ENCODE measurements at regions of chr20 and their contacts with region 1.

Region 1: DNA sequence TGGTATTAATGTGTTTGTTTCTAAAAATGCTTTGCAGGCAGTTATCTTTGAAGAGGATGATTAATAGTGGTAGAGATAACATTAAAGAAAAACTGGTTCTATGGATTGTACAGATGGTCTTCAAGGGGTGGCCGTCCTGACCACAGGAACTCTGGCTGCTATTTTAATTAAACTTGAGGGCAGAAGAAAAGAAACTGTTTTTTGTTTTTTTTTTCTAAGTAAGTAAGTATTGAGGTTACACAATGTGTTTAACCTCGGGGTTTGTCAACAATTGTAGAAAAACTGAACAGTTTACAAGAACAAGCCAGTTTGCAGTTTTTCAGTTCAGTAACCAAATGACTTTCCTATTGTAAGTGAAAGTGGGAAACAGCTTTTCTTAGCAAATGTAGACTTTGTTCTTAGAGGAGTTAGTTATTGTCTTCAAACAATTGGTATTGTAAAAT is 77.0 kb downstream of the PLCB1 start:
- DNase-seq: no peak
- ATAC-seq: no peak
- H3K4me3 ChIP-seq: no peak overlapping the region
- H3K27ac ChIP-seq: no peak overlapping the region
- H3K4me1 ChIP-seq: peaks cover 75% of the 10 kb centered on the region
- H3K27me3 ChIP-seq: no peaks in the 10 kb centered on the region
- CTCF ChIP-seq: no peak
- EP300 ChIP-seq: peak in 1 of 2 experiments; percentile 49; a peak in 1 of 4 replicates
- POLR2A ChIP-seq: no peak
- RAD21 ChIP-seq: no peak

Region 2: GRCh38 chr20:8223091-8223870 is 14.3 kb after region 1 on chr20:
- CTCF ChIA-PET with region 1: no interaction called
- POLR2A ChIA-PET with region 1: no interaction called
- in situ Hi-C with region 1: no loop called
- intact Hi-C with region 1: no loop called
- DNase-seq: peak; percentile 50
- ATAC-seq: no peak
- H3K4me3 ChIP-seq: no peak overlapping the region
- H3K27ac ChIP-seq: no peak overlapping the region
- H3K4me1 ChIP-seq: peaks cover 28% of the 10 kb centered on the region
- H3K27me3 ChIP-seq: no peaks in the 10 kb centered on the region
- CTCF ChIP-seq: no peak
- EP300 ChIP-seq: no peak
- POLR2A ChIP-seq: no peak
- RAD21 ChIP-seq: no peak

Region 3: GRCh38 chr20:8242827-8243724 is 34.1 kb after region 1 on chr20:
- CTCF ChIA-PET with region 1: no interaction called
- POLR2A ChIA-PET with region 1: no interaction called
- in situ Hi-C with region 1: no loop called
- intact Hi-C with region 1: no loop called
- DNase-seq: no peak
- ATAC-seq: no peak
- H3K4me3 ChIP-seq: no peak overlapping the region
- H3K27ac ChIP-seq: no peak overlapping the region
- H3K4me1 ChIP-seq: peaks cover 30% of the 10 kb centered on the region
- H3K27me3 ChIP-seq: no peaks in the 10 kb centered on the region
- CTCF ChIP-seq: no peak
- EP300 ChIP-seq: no peak
- POLR2A ChIP-seq: no peak
- RAD21 ChIP-seq: no peak

Region 4: GRCh38 chr20:8305449-8305978 is 96.5 kb after region 1 on chr20:
- CTCF ChIA-PET with region 1: no interaction called
- POLR2A ChIA-PET with region 1: no interaction called
- in situ Hi-C with region 1: no loop called
- intact Hi-C with region 1: loop called (anchors 5 kb)
- DNase-seq: peak; percentile 83
- ATAC-seq: peak; percentile 97
- H3K4me3 ChIP-seq: no peak overlapping the region
- H3K27ac ChIP-seq: no peak overlapping the region
- H3K4me1 ChIP-seq: no peaks in the 10 kb centered on the region
- H3K27me3 ChIP-seq: no peaks in the 10 kb centered on the region
- CTCF ChIP-seq: peak; percentile 87
- EP300 ChIP-seq: no peak
- POLR2A ChIP-seq: no peak
- RAD21 ChIP-seq: peak; percentile 87

Measured in HepG2 (cell line).